SK-N-SH (cell line): ENCODE measurements at regions of chr10 and their contacts with region 1.

Region 1: GRCh38 chr10:117320050-117320665 is 55.1 kb downstream of the PDZD8 start:
- DNase-seq: peak; percentile 23
- H3K4me3 ChIP-seq: no peak overlapping the region; a peak in 1 of 4 replicates
- H3K27ac ChIP-seq: no peak overlapping the region
- H3K4me1 ChIP-seq: no peaks in the 10 kb centered on the region
- H3K27me3 ChIP-seq: no peaks in the 10 kb centered on the region
- CTCF ChIP-seq: peak; percentile 72
- EP300 ChIP-seq: no peak
- RAD21 ChIP-seq: peak; percentile 79

Region 2: GRCh38 chr10:117167789-117168674 is 152.1 kb before region 1 on chr10:
- CTCF ChIA-PET with region 1: interaction called, 11 read pairs
- POLR2A ChIA-PET with region 1: no interaction called
- DNase-seq: peak; percentile 96
- H3K4me3 ChIP-seq: peak overlapping the region; percentile 28 to 37
- H3K27ac ChIP-seq: no peak overlapping the region
- H3K4me1 ChIP-seq: peaks cover 0 to 9% of the 10 kb centered on the region in 2 experiments; a peak in 1 of 4 replicates
- H3K27me3 ChIP-seq: peaks cover 85% of the 10 kb centered on the region
- CTCF ChIP-seq: peak; percentile 82
- EP300 ChIP-seq: no peak
- RAD21 ChIP-seq: peak; percentile 57

Region 3: GRCh38 chr10:117226824-117227451 is 93.2 kb before region 1 on chr10:
- CTCF ChIA-PET with region 1: interaction called, 534 read pairs
- POLR2A ChIA-PET with region 1: no interaction called
- DNase-seq: peak; percentile 61
- H3K4me3 ChIP-seq: peak overlapping the region in 1 of 2 experiments; percentile 25; a peak in 1 of 4 replicates
- H3K27ac ChIP-seq: no peak overlapping the region
- H3K4me1 ChIP-seq: no peaks in the 10 kb centered on the region; a peak in 1 of 4 replicates
- H3K27me3 ChIP-seq: peaks cover 5% of the 10 kb centered on the region; the same call in 1 of the 2 replicates
- CTCF ChIP-seq: peak; percentile 42
- EP300 ChIP-seq: no peak
- RAD21 ChIP-seq: peak; percentile 73

Region 4: DNA sequence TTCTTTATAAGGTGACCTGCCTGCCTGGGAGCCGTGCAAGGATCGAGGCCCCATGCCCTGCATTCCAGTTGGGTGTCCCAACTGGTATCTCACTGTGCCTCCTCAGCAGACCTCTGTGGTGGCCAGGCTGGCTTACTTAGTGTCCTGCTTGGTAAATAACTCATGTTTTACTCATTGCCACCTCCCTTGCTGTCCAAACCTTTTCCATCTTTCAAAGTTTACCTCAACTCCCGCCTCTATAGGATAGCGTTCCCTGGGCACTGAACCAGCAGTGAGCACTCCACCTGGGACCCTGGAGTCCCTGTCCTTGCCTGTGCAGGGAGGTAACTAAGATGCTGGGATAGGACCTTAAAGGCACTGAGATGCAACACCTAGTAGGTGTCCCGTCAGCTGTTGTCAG is 45.6 kb before region 1 on chr10:
- CTCF ChIA-PET with region 1: interaction called, 19 read pairs
- POLR2A ChIA-PET with region 1: no interaction called
- DNase-seq: no peak
- H3K4me3 ChIP-seq: no peak overlapping the region
- H3K27ac ChIP-seq: no peak overlapping the region
- H3K4me1 ChIP-seq: peaks cover 0 to 11% of the 10 kb centered on the region in 2 experiments; a peak in 1 of 4 replicates
- H3K27me3 ChIP-seq: no peaks in the 10 kb centered on the region
- CTCF ChIP-seq: no peak
- EP300 ChIP-seq: no peak
- RAD21 ChIP-seq: no peak

Region 5: DNA sequence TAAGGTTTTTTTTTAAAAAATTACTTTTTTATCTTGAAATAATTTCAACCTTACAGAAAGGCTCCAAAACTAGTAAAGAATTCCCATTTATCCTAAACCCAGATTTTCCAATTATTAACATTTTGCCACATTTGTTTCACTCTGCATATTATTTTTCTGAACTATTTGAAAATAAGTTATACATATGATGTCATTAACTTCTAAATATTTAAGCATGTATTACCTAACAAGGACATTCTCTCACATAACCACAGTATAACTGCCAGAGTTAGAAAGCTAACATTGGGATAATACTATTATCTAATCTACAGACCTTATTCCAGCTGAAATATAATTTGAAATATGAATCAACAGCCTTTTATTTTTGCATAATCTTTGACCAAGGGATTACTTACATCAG is 13.5 kb before region 1 on chr10:
- CTCF ChIA-PET with region 1: interaction called, 37 read pairs
- POLR2A ChIA-PET with region 1: no interaction called
- DNase-seq: no peak
- H3K4me3 ChIP-seq: no peak overlapping the region
- H3K27ac ChIP-seq: no peak overlapping the region
- H3K4me1 ChIP-seq: no peaks in the 10 kb centered on the region
- H3K27me3 ChIP-seq: no peaks in the 10 kb centered on the region
- CTCF ChIP-seq: no peak
- EP300 ChIP-seq: no peak
- RAD21 ChIP-seq: no peak

Region 6: DNA sequence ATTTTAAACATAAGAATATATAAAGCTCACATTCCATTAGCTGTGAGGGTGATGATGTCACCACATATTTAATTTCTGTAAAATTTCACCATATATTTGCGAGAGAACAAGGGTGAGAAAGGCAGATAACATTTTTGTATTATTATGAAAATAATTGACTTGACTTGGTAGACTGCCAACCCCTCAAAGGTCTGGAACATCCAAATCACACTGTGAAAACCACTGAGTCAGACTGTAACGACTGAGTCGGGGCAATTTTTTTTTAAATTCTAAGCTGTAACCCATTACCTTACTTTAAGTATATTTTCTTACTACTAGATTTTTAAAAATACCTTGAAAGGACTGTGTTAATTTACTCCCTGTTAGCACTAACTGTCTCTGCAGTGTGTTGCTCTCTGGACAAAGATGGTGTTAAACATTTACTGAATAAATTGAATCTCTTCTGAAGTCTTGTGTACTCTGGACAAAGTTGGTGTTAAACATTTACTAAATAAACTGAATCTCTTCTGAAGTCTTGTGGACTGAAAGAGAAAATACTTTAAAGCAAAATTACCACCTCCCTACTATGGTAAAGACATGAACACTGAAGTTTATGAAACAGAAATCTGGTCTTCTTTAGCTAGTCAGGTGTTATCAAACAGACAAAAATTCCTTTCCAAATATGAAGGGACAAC is 41.0 kb after region 1 on chr10:
- CTCF ChIA-PET with region 1: interaction called, 17 read pairs
- POLR2A ChIA-PET with region 1: no interaction called
- DNase-seq: no peak
- H3K4me3 ChIP-seq: no peak overlapping the region
- H3K27ac ChIP-seq: peak overlapping the region in 1 of 2 experiments; percentile 30; a peak in 3 of 4 replicates
- H3K4me1 ChIP-seq: peaks cover 0 to 37% of the 10 kb centered on the region in 2 experiments; a peak in 3 of 4 replicates
- H3K27me3 ChIP-seq: no peaks in the 10 kb centered on the region
- CTCF ChIP-seq: no peak
- EP300 ChIP-seq: no peak
- RAD21 ChIP-seq: no peak

Region 7: GRCh38 chr10:117537436-117537903 is 217.3 kb after region 1 on chr10:
- CTCF ChIA-PET with region 1: no interaction called
- POLR2A ChIA-PET with region 1: no interaction called
- DNase-seq: peak; percentile 93
- H3K4me3 ChIP-seq: peak overlapping the region in 1 of 2 experiments; percentile 37; a peak in 1 of 4 replicates
- H3K27ac ChIP-seq: no peak overlapping the region
- H3K4me1 ChIP-seq: peaks cover 0 to 21% of the 10 kb centered on the region in 2 experiments; a peak in 2 of 4 replicates
- H3K27me3 ChIP-seq: peaks cover 89% of the 10 kb centered on the region
- CTCF ChIP-seq: peak; percentile 65
- EP300 ChIP-seq: no peak
- RAD21 ChIP-seq: peak; percentile 72